ENCODE measurements at regions of chr21 and their contacts with region 1.

Region 1: DNA sequence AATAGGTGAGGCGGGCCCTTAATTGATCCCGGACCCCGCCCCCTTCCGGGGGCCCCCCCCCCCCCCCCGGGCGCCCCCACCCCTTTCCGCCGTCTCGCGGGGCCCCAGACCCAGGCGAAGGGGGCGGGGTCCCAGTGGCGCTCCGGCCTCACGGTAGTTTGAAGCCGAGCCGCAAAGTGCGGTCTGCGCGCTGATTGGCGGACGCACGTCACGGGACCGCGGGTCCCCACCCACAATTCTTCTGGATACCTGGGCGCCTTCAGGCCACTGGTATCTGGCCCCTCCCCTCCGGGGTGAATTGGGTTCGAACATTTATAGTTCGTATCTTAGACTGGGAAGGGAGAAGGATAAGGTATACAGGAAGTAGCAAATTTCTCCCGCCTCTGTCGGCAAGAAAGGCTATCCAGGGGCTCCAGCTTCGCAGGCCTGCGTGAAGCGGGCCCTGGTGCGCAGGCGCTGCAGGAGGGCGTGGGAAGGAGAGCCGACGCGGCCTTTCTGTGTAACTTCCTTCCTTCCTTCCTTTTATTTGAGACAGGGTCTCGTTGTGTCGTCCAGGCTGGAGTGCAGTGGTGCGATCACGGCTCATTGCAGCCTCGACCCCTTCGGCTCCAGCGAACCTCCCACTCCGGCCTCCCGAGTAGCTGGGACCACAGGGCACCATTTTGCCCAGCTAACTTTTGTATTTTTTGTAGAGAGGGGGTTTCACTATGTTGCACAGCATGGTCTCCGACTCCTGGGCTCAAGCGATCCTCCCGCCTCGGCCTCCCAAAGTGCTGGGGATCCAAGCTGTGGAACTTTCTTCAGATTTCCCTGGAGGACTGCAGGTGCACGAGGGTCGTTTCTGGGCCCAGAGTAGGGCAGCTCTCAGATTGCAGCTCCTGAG is 564 bp upstream of the HMGN1 start:
- DNase-seq: peak; percentile 82
- ATAC-seq: peak; percentile 92
- H3K4me3 ChIP-seq: peak overlapping the region; percentile 88
- H3K27ac ChIP-seq: peak overlapping the region; percentile 77
- H3K4me1 ChIP-seq: 0 out of 2 replicates have a peak, but pooled peaks cover 3% of the 10 kb centered on the region
- H3K27me3 ChIP-seq: no peaks in the 10 kb centered on the region
- CTCF ChIP-seq: no peak
- EP300 ChIP-seq: no peak
- POLR2A ChIP-seq: peak; percentile 92
- RAD21 ChIP-seq: no peak

Region 2: GRCh38 chr21:38945545-38946245 is 403.8 kb before region 1 on chr21:
- CTCF ChIA-PET with region 1: no interaction called
- POLR2A ChIA-PET with region 1: no interaction called
- RAD21 ChIA-PET with region 1: no interaction called
- SMC1A ChIA-PET with region 1: no interaction called
- in situ Hi-C with region 1: no loop called
- intact Hi-C with region 1: no loop called
- DNase-seq: no peak
- ATAC-seq: no peak
- H3K4me3 ChIP-seq: no peak overlapping the region
- H3K27ac ChIP-seq: no peak overlapping the region
- H3K4me1 ChIP-seq: no peaks in the 10 kb centered on the region
- H3K27me3 ChIP-seq: no peaks in the 10 kb centered on the region
- CTCF ChIP-seq: no peak
- EP300 ChIP-seq: no peak
- POLR2A ChIP-seq: no peak
- RAD21 ChIP-seq: no peak

Region 3: DNA sequence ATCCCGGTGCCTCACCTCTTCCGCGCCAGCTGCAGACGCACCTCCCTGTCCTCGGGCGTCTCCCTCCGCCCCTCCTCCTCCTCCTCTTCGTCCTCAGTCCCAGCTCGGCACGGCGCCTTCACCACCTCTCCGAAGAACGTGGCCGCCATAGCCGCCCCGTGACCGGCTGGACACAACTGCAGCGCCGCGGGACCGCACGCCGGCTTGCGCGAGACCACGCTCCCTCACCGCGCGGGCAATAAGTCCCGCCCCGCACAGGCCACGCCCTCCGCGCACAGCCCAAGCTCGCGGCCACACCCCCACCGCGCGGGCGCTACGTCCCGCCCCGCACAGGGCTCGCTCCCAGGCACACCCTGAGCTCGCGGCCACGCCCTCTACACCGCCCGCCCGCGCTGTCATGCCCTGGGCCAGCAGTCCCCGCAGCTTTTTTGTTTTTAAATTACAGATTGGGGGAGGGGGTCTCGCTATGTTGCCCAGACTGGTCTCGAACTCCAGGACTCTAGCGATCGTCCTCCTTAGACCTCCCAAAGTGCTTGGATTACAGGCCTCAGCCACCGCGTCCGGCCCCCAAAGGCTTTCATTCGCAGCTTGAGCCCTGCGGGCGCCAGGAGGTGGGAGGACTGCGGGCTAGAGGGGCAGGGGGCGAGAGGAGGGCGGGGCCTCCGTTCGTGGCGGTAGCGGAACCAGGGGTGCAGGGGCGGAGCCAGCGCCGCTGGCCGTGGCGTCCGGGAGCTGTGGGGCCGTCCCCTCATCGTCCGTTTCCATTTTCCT is 166.0 kb before region 1 on chr21 and contains the start of gene PSMG1:
- CTCF ChIA-PET with region 1: no interaction called
- POLR2A ChIA-PET with region 1: interaction called, 12 read pairs
- RAD21 ChIA-PET with region 1: no interaction called
- SMC1A ChIA-PET with region 1: interaction called, 3 read pairs
- in situ Hi-C with region 1: no loop called
- intact Hi-C with region 1: no loop called
- DNase-seq: peak; percentile 77
- ATAC-seq: peak; percentile 93
- H3K4me3 ChIP-seq: peak within 1 kb of the TSS; percentile 95
- H3K27ac ChIP-seq: peak within 1 kb of the TSS; percentile 88
- H3K4me1 ChIP-seq: peaks cover 26% of the 10 kb centered on the region
- H3K27me3 ChIP-seq: no peaks in the 10 kb centered on the region
- CTCF ChIP-seq: no peak
- EP300 ChIP-seq: no peak
- POLR2A ChIP-seq: peak; percentile 94
- RAD21 ChIP-seq: no peak
- polyA plus RNA-seq, gene PSMG1: 21.3 to 79.8 TPM

Region 4: DNA sequence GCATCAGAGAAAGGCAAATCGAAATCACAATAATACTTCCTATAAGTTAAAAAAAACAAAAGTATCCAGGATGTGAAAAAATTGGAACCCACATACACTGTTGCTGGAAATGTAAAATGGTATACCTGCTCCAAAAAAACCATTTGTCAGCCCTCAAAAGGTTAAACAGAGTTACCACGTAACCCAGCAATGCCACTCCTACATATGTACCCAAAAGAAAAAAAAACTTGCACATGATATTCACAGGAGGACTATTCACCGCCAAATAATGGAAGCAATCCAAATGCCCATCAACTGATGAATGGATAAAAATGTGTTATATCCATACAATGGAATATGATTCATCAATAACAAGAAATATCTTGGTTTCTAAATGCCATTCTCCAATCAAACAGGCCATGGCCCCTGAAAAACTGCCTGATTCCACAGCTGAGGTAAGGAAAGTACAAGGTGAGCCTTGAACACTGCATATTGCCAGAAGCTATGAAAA is 127.4 kb before region 1 on chr21:
- CTCF ChIA-PET with region 1: no interaction called
- POLR2A ChIA-PET with region 1: no interaction called
- RAD21 ChIA-PET with region 1: no interaction called
- SMC1A ChIA-PET with region 1: no interaction called
- in situ Hi-C with region 1: no loop called
- intact Hi-C with region 1: no loop called
- DNase-seq: no peak
- ATAC-seq: no peak
- H3K4me3 ChIP-seq: no peak overlapping the region
- H3K27ac ChIP-seq: no peak overlapping the region
- H3K4me1 ChIP-seq: no peaks in the 10 kb centered on the region
- H3K27me3 ChIP-seq: no peaks in the 10 kb centered on the region
- CTCF ChIP-seq: no peak
- EP300 ChIP-seq: no peak
- POLR2A ChIP-seq: no peak
- RAD21 ChIP-seq: no peak

Region 5: DNA sequence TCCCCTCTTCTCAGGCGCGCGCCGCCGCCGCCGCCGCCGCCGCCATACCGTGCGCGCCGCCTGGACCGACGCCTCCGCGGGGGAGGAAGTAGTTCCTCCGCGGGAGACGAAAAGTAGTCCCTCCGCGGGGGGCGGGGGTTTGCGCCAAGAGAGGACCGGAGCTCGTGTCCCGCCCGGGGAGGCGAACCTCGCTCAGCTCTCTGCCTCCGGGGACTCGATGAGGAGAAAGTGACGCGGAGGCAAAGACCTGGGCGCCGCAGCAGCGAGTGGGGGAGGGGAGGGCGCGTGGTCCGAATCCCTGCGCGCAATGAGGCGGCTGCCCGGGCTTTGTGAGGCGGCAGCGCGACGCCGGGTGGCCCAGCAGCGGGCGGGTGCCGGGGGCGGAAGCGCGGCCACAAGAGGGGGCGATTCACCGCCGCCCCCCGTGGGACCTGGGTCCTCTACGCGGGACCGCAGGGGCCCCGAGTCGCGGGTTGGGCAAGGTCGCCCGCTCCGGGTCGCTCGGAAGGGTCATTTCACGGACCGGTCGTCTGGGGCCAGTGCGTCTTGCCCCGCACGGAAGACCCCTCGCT is 35.8 kb before region 1 on chr21 and contains the start of gene BRWD1:
- CTCF ChIA-PET with region 1: interaction called, 6 read pairs
- POLR2A ChIA-PET with region 1: interaction called, 6 read pairs
- RAD21 ChIA-PET with region 1: interaction called, 3 read pairs
- SMC1A ChIA-PET with region 1: interaction called, 6 read pairs
- in situ Hi-C with region 1: no loop called
- intact Hi-C with region 1: loop called (anchors 2 kb)
- DNase-seq: no peak
- ATAC-seq: peak; percentile 77
- H3K4me3 ChIP-seq: peak within 1 kb of the TSS; percentile 85
- H3K27ac ChIP-seq: peak within 1 kb of the TSS; percentile 93
- H3K4me1 ChIP-seq: peaks cover 4% of the 10 kb centered on the region; the same call in 1 of the 2 replicates
- H3K27me3 ChIP-seq: no peaks in the 10 kb centered on the region
- CTCF ChIP-seq: peak; percentile 4 to 29 (median 16); a peak in 3 of 6 replicates
- EP300 ChIP-seq: 0 out of 4 replicates have a peak, but pooled peaks of 1 of the 2 experiments have one; percentile 4
- POLR2A ChIP-seq: peak; percentile 92
- RAD21 ChIP-seq: no peak
- polyA plus RNA-seq, gene BRWD1: 3.1 to 3.4 TPM

Region 6: DNA sequence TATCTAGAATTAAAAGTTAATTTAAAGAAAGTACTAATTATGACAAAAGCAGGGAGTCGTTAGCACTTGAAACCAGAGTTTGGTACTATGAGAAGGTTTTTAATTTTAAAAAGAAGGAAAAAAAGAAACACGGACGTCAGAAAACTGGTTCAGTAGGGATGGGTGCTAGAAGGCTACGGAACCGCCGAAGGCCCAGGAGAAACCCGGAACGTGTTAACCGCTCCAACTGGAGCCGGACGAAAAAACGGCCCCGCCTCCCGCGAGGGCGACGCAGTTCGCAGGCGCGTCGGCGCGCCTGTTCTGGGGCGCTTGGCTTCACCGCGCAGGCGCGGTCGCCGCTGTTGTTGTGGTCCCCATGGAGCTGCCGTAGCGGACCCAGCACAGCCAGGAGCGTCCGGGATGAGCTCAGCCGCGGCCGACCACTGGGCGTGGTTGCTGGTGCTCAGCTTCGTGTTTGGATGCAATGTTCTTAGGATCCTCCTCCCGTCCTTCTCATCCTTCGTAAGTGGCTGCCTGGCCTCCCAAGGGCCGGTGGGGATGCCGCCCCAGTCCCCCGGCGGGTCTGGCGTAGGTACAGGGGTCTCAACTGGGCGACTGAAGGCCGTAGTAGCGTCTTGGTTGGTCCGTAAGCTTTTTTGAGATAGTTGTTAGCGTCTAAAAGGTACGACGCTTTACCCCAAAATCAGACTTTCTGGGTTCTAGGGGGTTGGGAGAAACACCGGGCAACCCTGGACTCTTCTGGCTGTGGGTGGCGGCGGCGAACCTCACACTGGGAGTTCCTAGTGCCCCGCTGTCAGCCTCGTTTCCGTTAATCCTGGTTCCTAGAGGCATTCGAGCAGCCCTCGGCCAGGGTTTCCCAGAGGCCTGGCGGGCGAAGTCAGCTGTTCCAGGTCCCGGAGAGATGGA is 30.8 kb after region 1 on chr21:
- CTCF ChIA-PET with region 1: no interaction called
- POLR2A ChIA-PET with region 1: interaction called, 8 read pairs
- RAD21 ChIA-PET with region 1: interaction called, 8 read pairs
- SMC1A ChIA-PET with region 1: interaction called, 3 read pairs
- in situ Hi-C with region 1: no loop called
- intact Hi-C with region 1: loop called (anchors 2 kb)
- DNase-seq: peak; percentile 55
- ATAC-seq: peak; percentile 99
- H3K4me3 ChIP-seq: peak overlapping the region; percentile 72
- H3K27ac ChIP-seq: peak overlapping the region; percentile 45; the same call in 1 of the 2 replicates
- H3K4me1 ChIP-seq: peaks cover 4% of the 10 kb centered on the region
- H3K27me3 ChIP-seq: no peaks in the 10 kb centered on the region
- CTCF ChIP-seq: no peak
- EP300 ChIP-seq: no peak
- POLR2A ChIP-seq: peak; percentile 79
- RAD21 ChIP-seq: no peak

Measured in GM12878 (cell line).